Left cardiac atrium (tissue), 4 donors: ENCODE measurements at regions of chr15 and their contacts with region 1.

Region 1: GRCh38 chr15:90529371-90530249 is at the start of gene CRTC3:
- DNase-seq: peak; percentile 62
- ATAC-seq: peak; percentile 93 to 94
- total RNA-seq, gene CRTC3: 23.1 to 29.4 TPM

Region 2: DNA sequence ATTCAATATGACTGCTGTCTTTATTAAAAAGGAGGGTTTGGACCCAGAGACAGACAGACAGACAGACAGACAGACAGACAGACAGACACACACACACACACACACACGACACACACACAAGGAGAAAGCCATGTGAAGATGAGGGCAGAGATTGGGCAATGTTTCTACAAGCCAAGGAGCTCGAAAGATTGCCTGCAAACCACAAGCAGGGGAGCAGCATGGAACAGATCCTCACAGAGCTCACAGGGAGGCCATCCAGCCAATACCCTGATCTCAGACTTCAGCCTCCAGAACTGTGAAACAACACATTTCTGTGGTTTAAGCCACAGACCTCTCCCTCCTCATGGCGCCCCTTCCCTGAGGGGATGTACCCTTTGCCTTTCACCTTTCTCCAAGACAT is 1477.1 kb before region 1 on chr15:
- intact Hi-C with region 1: no loop called
- DNase-seq: no peak
- ATAC-seq: no peak

Region 3: DNA sequence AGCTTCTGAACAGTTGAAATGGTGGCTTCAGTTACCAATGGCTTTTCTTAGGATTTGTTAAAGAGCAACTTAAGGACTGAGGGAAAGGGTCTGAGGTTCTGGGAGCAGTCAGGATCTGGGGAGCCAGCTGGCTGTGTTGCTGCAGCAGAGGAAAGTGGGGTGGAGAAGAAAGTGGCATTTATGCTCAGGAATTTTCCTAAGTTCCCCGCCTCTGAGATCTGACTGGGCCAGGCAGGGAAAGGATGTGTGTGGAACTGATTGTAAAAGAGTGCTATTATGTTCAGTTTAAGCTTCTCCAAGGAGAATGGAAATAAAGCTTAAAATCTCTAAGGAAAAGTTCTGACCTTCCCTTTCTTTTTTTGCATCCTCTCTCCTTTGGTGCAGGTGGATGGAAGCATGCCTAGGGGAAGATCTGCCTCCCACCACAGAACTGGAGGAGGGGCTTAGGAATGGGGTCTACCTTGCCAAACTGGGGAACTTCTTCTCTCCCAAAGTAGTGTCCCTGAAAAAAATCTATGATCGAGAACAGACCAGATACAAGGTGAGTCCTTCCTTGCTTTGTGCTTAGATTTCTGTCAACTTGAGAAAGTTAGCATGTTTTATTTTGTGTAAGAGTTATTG is 103.8 kb before region 1 on chr15:
- intact Hi-C with region 1: no loop called
- DNase-seq: no peak
- ATAC-seq: peak in 1 of 2 donors; percentile 41

Region 4: GRCh38 chr15:90598031-90598577 is 68.5 kb after region 1 on chr15:
- intact Hi-C with region 1: loop called (anchors 10 kb)
- DNase-seq: peak; percentile 64
- ATAC-seq: peak; percentile 49 to 60

Region 5: GRCh38 chr15:90603893-90604292 is 74.3 kb after region 1 on chr15:
- intact Hi-C with region 1: loop called (anchors 10 kb)
- DNase-seq: peak; percentile 43
- ATAC-seq: no peak